BJ (cell line): ENCODE measurements at regions of chr15 and their contacts with region 1.

Region 1: DNA sequence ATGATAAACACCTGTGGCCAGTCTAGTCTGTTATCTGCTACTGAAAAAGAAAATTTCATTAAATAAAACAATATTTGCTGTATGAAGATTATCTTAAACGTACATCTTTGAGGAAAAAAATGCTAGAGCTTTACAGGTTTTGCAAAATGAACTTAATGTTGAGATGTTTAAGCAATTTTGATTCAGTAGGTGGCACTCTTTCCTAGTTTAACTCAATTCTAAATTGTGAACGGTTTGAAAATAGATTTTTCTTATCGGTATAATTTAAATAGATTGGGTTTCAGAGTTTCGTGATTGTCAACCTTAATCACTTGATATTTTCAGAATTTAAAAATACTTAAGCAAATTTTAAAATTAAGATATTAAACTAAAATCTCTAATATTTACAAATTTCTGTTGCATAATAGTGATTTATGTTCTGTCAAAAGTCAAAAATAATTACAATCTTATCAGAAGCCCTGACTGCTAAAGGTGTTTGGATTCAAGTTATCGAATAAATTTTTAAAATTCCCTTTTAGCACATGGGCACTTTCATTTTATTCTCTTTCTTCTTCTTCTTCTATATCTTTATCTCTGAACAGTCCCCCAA is 7.0 kb upstream of the RNF111 start:
- DNase-seq: no peak
- H3K4me3 ChIP-seq: no peak overlapping the region
- H3K27me3 ChIP-seq: peaks cover 2% of the 10 kb centered on the region; the same call in 1 of the 2 replicates
- CTCF ChIP-seq: peak; percentile 37; the same call in 1 of the 2 replicates

Region 2: DNA sequence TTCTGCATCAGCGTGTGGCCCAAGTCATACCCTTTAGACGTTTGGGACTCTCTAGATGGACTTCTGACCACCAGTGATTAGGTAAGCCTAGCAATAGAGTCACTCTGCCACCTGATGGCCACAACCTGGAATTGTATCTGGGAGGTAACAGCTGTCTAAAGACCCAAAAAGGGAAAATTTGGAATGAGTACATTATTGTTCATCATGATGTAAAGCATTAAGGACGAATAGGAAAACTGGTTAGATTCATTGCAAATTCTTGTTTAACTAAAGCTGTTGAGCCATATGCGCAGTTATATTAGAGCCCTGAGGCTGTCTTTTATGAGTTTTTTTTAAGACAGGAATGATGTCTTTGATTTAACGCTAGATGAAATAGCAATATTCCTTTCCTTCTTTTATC is 521.2 kb after region 1 on chr15:
- CTCF ChIA-PET with region 1: interaction called, 17 read pairs
- POLR2A ChIA-PET with region 1: no interaction called
- DNase-seq: no peak
- H3K4me3 ChIP-seq: no peak overlapping the region
- H3K27me3 ChIP-seq: no peaks in the 10 kb centered on the region
- CTCF ChIP-seq: peak; percentile 66